Body of pancreas (tissue), 4 donors: ENCODE measurements at regions of chr5 and their contacts with region 1.

Region 1: DNA sequence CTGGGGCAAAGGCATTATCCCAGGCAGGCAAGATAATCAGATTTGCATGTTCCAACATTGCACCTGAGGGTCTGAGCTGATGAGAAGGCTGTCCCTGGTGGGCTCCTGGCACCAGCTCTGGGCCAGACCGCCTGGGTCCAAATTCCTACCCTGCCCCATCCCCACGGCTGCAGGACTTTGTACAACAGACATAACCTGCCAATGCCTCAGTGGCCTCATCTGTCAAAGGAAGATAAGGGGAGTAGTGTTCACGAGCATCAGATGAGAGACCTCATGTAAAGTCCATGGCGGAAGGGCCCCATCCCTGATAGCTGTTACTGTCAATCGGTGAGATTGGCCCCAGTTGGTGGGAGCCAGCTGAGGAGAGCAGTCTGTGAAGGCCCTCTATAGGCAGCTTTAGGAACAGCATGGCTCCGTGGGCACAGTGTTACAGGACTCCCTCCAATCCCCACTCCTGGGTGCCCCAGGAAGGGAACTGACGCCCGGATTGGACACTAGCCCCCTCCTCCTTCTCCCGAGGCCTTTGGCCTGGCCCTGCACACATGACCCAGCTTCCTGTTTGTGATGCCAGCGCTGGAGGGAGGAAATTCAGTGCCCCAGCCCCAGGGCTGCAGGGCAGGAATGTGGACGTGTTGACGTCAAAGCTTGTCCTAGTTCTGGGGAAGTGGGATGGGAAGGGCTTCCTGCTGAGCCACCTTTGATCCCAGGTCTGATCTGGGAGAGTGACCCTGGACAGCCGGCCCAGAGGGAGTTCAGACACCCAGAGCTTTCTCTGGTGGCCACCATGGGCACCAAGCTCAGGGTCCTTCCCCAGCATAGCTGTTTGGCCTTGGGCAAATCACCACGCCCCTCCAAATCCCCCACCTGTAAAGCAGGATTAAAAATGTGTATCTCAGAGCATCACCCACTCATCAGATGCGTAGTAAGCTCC is 56.2 kb downstream of the DUSP1 start:
- DNase-seq: peak; percentile 76 to 87 (median 82)
- ATAC-seq: peak; percentile 76
- H3K4me3 ChIP-seq: no peak overlapping the region
- H3K27ac ChIP-seq: peak overlapping the region; percentile 52 to 65 (median 59)
- H3K4me1 ChIP-seq: peaks cover 15% of the 10 kb centered on the region
- H3K27me3 ChIP-seq: no peaks in the 10 kb centered on the region
- CTCF ChIP-seq: peak; percentile 50 to 86 (median 79)
- POLR2A ChIP-seq: peak in 2 of 3 donors; percentile 18 to 34

Region 2: DNA sequence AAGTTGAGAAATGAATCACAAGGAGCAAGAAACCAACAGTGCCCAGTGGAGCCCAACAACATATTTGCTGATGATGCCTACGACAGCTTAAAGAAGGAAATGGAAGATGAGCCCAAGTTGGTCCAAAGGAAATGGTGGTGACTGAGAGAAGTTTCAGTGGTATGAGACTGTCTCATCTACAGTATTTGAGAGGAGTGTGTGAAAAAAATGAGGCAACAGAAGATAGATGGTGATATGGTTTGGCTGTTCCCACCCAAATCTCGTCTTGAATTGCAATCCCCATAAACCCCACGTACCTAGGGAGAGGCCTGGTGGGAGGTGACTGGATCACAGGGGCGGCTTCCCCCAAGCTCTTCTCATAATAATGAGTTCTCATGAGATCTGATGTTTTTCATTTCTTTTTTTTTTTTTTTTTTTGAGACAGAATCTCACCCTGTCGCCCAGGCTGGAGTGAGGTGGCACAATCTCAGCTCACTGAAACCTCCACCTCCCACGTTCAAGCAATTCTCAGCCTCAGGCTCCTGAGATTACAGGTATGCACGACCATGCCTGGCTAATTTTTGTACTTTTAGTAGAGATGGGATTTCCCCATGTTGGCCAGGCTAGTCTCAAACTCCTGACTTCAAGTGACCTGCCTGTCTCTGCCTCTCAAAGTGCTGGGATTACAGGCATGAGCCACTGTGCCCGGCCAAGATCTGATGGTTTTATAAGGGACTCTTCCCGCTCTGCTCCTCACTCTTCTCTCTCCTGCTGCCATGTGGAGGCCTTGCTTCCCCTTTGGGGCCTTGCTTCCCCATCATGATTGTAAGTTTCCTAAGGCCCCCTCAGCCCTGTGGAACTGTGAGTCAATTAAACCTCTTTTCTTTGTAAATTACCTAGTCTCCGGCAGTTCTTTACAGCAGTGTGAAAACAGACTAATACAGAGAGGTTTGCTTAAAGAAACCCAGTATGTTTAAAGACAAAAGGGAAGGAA is 490.6 kb before region 1 on chr5:
- intact Hi-C with region 1: no loop called
- DNase-seq: no peak
- ATAC-seq: no peak
- H3K4me3 ChIP-seq: no peak overlapping the region
- H3K27ac ChIP-seq: no peak overlapping the region
- H3K4me1 ChIP-seq: no peaks in the 10 kb centered on the region
- H3K27me3 ChIP-seq: no peaks in the 10 kb centered on the region
- CTCF ChIP-seq: no peak
- POLR2A ChIP-seq: no peak

Region 3: GRCh38 chr5:172764849-172765765 is 50.4 kb after region 1 on chr5:
- intact Hi-C with region 1: loop called (anchors 10 kb)
- DNase-seq: peak; percentile 97 to 100 (median 98)
- ATAC-seq: peak; percentile 77
- H3K4me3 ChIP-seq: no peak overlapping the region
- H3K27ac ChIP-seq: peak overlapping the region; percentile 94 to 99 (median 98)
- H3K4me1 ChIP-seq: peaks cover 50% of the 10 kb centered on the region
- H3K27me3 ChIP-seq: no peaks in the 10 kb centered on the region
- CTCF ChIP-seq: peak in 2 of 7 experiments; percentile 12 to 18
- POLR2A ChIP-seq: peak in 2 of 3 donors; percentile 71 to 83

Region 4: DNA sequence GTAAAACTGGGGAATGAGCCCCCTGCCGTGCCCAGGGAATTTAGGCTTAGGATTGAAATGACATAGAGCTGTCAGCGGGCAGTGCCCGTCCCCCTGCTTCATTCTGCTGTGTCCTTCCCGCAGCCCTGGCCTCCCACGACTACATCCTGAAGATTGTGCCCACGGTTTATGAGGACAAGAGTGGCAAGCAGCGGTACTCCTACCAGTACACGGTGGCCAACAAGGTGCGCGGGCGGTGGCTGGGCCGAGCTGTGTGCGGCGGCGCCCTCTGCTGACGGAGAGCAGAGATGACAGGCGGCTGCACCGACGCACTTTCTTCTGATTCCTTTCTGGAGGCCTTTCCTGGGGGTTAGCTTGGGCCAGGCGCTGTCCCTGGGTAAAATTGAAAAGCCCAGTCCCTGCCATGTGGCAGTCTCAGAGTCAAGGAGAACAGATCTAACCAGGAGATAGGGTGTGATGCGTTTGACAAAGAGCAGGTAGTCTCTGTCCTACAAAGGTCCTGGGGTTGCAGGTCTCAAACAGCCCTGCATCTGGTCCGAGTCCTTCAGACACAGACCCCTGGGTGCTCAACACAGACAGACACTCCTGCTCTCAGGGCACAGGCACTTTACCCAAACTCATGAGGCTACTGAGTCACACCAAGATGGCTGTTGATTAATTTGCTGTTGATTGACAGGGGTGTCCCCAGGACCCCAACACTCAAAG is 217.7 kb after region 1 on chr5:
- intact Hi-C with region 1: loop called (anchors 5 kb)
- DNase-seq: peak; percentile 78 to 82 (median 80)
- ATAC-seq: peak; percentile 95
- H3K4me3 ChIP-seq: no peak overlapping the region
- H3K27ac ChIP-seq: peak overlapping the region in 1 of 4 donors; percentile 45
- H3K4me1 ChIP-seq: peaks cover 5% of the 10 kb centered on the region
- H3K27me3 ChIP-seq: no peaks in the 10 kb centered on the region
- CTCF ChIP-seq: peak; percentile 88 to 96 (median 94)
- POLR2A ChIP-seq: peak in 2 of 3 donors; percentile 6 to 10

Region 5: DNA sequence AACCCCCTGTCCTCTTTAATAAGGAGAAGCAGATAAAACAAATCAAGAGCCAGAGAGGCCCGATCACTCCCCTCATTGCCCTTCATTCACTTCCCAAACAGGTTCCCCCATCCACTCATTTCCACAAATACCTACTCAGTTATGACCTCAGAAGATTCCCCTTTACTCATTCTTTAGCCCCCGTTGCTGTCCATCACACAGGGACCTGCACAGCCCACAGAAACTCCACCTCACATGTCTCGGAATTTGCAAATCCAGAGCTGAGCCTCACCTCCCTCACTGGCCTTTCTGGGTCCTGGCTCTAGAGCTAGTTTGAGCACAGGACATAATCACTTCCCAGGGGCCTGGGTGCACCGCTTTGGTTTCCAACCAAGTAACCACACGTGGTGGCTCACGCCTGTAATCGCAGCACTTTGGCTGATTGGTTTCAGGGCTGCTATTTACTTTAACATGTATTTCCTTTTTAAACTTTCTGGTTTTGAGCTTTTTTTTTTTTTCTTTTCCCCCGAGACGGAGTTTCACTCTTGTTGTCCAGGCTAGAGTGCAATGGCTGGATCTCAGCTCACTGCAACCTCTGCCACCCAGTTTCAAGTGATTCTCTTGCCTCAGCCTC is 286.6 kb after region 1 on chr5:
- intact Hi-C with region 1: no loop called
- DNase-seq: no peak
- ATAC-seq: no peak
- H3K4me3 ChIP-seq: no peak overlapping the region
- H3K27ac ChIP-seq: no peak overlapping the region
- H3K4me1 ChIP-seq: peaks cover 19% of the 10 kb centered on the region
- H3K27me3 ChIP-seq: no peaks in the 10 kb centered on the region
- CTCF ChIP-seq: no peak
- POLR2A ChIP-seq: no peak